GM12878 (cell line): ENCODE measurements at regions of chr2 and their contacts with region 1.

Region 1: GRCh38 chr2:202671317-202672035 is 36.7 kb downstream of the FAM117B start:
- DNase-seq: no peak
- ATAC-seq: no peak
- H3K4me3 ChIP-seq: no peak overlapping the region
- H3K27ac ChIP-seq: no peak overlapping the region
- H3K4me1 ChIP-seq: peaks cover 17% of the 10 kb centered on the region
- H3K27me3 ChIP-seq: no peaks in the 10 kb centered on the region
- CTCF ChIP-seq: no peak
- EP300 ChIP-seq: no peak
- POLR2A ChIP-seq: no peak
- RAD21 ChIP-seq: no peak

Region 2: GRCh38 chr2:202072226-202072625 is 599.2 kb before region 1 on chr2:
- CTCF ChIA-PET with region 1: no interaction called
- POLR2A ChIA-PET with region 1: no interaction called
- RAD21 ChIA-PET with region 1: no interaction called
- SMC1A ChIA-PET with region 1: no interaction called
- in situ Hi-C with region 1: no loop called
- intact Hi-C with region 1: no loop called
- DNase-seq: no peak
- ATAC-seq: peak; percentile 43; the same call in 2 of the 3 replicates
- H3K4me3 ChIP-seq: no peak overlapping the region
- H3K27ac ChIP-seq: no peak overlapping the region
- H3K4me1 ChIP-seq: 0 out of 2 replicates have a peak, but pooled peaks cover 2% of the 10 kb centered on the region
- H3K27me3 ChIP-seq: peaks cover 0 to 2% of the 10 kb centered on the region in 2 experiments; a peak in 1 of 4 replicates
- CTCF ChIP-seq: peak; percentile 13 to 41 (median 21); a peak in 2 of 6 replicates
- EP300 ChIP-seq: no peak
- POLR2A ChIP-seq: no peak
- RAD21 ChIP-seq: no peak

Region 3: DNA sequence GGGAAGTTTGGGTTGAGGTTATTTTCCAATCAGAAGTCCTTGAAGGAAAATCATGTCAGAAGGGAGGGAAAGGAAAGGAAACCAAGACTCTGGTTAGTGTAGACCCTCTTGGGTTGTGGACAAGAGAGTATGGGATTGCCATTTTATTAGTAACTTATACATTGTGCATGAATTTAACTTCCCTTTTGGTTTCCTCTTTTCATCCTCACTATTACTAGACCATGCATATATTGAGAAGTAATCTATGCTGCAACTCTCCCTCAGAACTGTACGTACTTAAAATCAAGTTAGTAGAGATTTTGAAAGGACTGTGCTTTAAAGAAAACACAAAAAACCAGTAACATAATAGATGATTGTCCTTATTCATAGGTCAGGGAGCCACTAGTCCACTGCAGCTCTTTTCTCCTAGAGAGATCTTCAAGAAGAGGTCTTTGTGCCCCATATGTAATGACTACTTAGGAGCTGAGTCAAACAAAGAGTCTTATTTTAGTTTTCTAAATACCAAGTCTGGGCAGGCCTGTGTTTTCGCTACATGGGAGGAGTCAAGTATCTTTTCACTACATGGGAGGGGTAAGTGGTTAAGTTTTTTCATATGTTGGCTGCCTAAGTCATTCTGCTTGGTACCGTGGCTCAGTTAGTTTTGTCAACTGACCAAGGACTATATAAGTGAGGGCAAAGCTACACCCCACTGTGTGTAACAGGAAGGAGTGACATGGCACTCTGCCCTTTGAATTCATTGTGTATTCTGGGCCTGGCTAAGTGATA is 61.9 kb before region 1 on chr2:
- CTCF ChIA-PET with region 1: interaction called, 4 read pairs
- POLR2A ChIA-PET with region 1: interaction called, 4 read pairs
- RAD21 ChIA-PET with region 1: interaction called, 3 read pairs
- SMC1A ChIA-PET with region 1: interaction called, 12 read pairs
- in situ Hi-C with region 1: no loop called
- intact Hi-C with region 1: no loop called
- DNase-seq: peak; percentile 90
- ATAC-seq: peak; percentile 91
- H3K4me3 ChIP-seq: no peak overlapping the region
- H3K27ac ChIP-seq: peak overlapping the region; percentile 64
- H3K4me1 ChIP-seq: peaks cover 34% of the 10 kb centered on the region
- H3K27me3 ChIP-seq: no peaks in the 10 kb centered on the region
- CTCF ChIP-seq: no peak
- EP300 ChIP-seq: no peak; a peak in 1 of 4 replicates
- POLR2A ChIP-seq: no peak
- RAD21 ChIP-seq: no peak

Region 4: GRCh38 chr2:202634556-202635427 is 36.7 kb before region 1 on chr2 and contains the start of gene FAM117B:
- CTCF ChIA-PET with region 1: no interaction called
- POLR2A ChIA-PET with region 1: interaction called, 6 read pairs
- RAD21 ChIA-PET with region 1: interaction called, 17 read pairs
- SMC1A ChIA-PET with region 1: interaction called, 26 read pairs
- in situ Hi-C with region 1: no loop called
- intact Hi-C with region 1: loop called (anchors 5 kb)
- DNase-seq: peak; percentile 84
- ATAC-seq: peak; percentile 96
- H3K4me3 ChIP-seq: peak within 1 kb of the TSS; percentile 98
- H3K27ac ChIP-seq: peak within 1 kb of the TSS; percentile 78
- H3K4me1 ChIP-seq: 0 out of 2 replicates have a peak, but pooled peaks cover 4% of the 10 kb centered on the region
- H3K27me3 ChIP-seq: no peaks in the 10 kb centered on the region
- CTCF ChIP-seq: peak in 2 of 3 experiments; percentile 14 to 16; a peak in 1 of 6 replicates
- EP300 ChIP-seq: peak; percentile 8 to 29; a peak in 2 of 4 replicates
- POLR2A ChIP-seq: peak; percentile 86
- RAD21 ChIP-seq: 0 out of 2 replicates have a peak, but pooled peaks have one; percentile 1
- polyA plus RNA-seq, gene FAM117B: 1.6 to 4.1 TPM

Region 5: GRCh38 chr2:202660796-202661195 is 10.7 kb before region 1 on chr2:
- CTCF ChIA-PET with region 1: no interaction called
- POLR2A ChIA-PET with region 1: interaction called, 16 read pairs
- RAD21 ChIA-PET with region 1: interaction called, 7 read pairs
- SMC1A ChIA-PET with region 1: interaction called, 16 read pairs
- in situ Hi-C with region 1: no loop called
- intact Hi-C with region 1: no loop called
- DNase-seq: no peak
- ATAC-seq: no peak
- H3K4me3 ChIP-seq: no peak overlapping the region
- H3K27ac ChIP-seq: no peak overlapping the region
- H3K4me1 ChIP-seq: peaks cover 15% of the 10 kb centered on the region
- H3K27me3 ChIP-seq: no peaks in the 10 kb centered on the region
- CTCF ChIP-seq: no peak
- EP300 ChIP-seq: no peak
- POLR2A ChIP-seq: no peak
- RAD21 ChIP-seq: no peak